ENCODE measurements at regions of chr2 and their contacts with region 1.

Region 1: GRCh38 chr2:127049927-127050802 is 56.8 kb downstream of the BIN1 start:
- DNase-seq: no peak
- ATAC-seq: peak; percentile 93
- H3K4me3 ChIP-seq: no peak overlapping the region
- H3K27ac ChIP-seq: no peak overlapping the region
- H3K4me1 ChIP-seq: no peaks in the 10 kb centered on the region
- H3K27me3 ChIP-seq: no peaks in the 10 kb centered on the region
- CTCF ChIP-seq: peak; percentile 81 to 97 (median 86)
- EP300 ChIP-seq: no peak
- POLR2A ChIP-seq: no peak
- RAD21 ChIP-seq: peak; percentile 62

Region 2: GRCh38 chr2:126886211-126886915 is 163.8 kb before region 1 on chr2:
- CTCF ChIA-PET with region 1: interaction called, 4 read pairs
- POLR2A ChIA-PET with region 1: no interaction called
- RAD21 ChIA-PET with region 1: no interaction called
- SMC1A ChIA-PET with region 1: no interaction called
- in situ Hi-C with region 1: no loop called
- intact Hi-C with region 1: loop called (anchors 10 kb)
- DNase-seq: no peak
- ATAC-seq: peak; percentile 95
- H3K4me3 ChIP-seq: no peak overlapping the region
- H3K27ac ChIP-seq: no peak overlapping the region
- H3K4me1 ChIP-seq: no peaks in the 10 kb centered on the region
- H3K27me3 ChIP-seq: no peaks in the 10 kb centered on the region; a peak in 1 of 4 replicates
- CTCF ChIP-seq: peak; percentile 66 to 69 (median 66)
- EP300 ChIP-seq: no peak
- POLR2A ChIP-seq: no peak
- RAD21 ChIP-seq: 0 out of 2 replicates have a peak, but pooled peaks have one; percentile 15